ENCODE measurements at regions of chr15 and their contacts with region 1.

Region 1: GRCh38 chr15:52679232-52680040 is at the start of gene ATOSA:
- DNase-seq: peak; percentile 69
- ATAC-seq: peak; percentile 87
- H3K4me3 ChIP-seq: peak within 1 kb of the TSS; percentile 70 to 74
- H3K27ac ChIP-seq: peak within 1 kb of the TSS; percentile 78
- H3K4me1 ChIP-seq: peaks cover 11 to 13% of the 10 kb centered on the region in 2 experiments
- H3K27me3 ChIP-seq: no peaks in the 10 kb centered on the region
- CTCF ChIP-seq: no peak
- POLR2A ChIP-seq: peak; percentile 33
- RAD21 ChIP-seq: no peak
- total RNA-seq, gene ATOSA: 4.7 TPM

Region 2: GRCh38 chr15:52568601-52569256 is 110.7 kb before region 1 on chr15 and contains the start of gene ARPP19:
- CTCF ChIA-PET with region 1: no interaction called
- POLR2A ChIA-PET with region 1: no interaction called
- RAD21 ChIA-PET with region 1: no interaction called
- intact Hi-C with region 1: loop called (anchors 5 kb)
- DNase-seq: peak; percentile 95
- ATAC-seq: peak; percentile 93
- H3K4me3 ChIP-seq: peak within 1 kb of the TSS; percentile 91 to 98
- H3K27ac ChIP-seq: peak within 1 kb of the TSS; percentile 91
- H3K4me1 ChIP-seq: peaks cover 8 to 16% of the 10 kb centered on the region in 2 experiments
- H3K27me3 ChIP-seq: no peaks in the 10 kb centered on the region
- CTCF ChIP-seq: no peak
- POLR2A ChIP-seq: peak; percentile 40
- RAD21 ChIP-seq: no peak
- total RNA-seq, gene ARPP19: 163 TPM

Region 3: DNA sequence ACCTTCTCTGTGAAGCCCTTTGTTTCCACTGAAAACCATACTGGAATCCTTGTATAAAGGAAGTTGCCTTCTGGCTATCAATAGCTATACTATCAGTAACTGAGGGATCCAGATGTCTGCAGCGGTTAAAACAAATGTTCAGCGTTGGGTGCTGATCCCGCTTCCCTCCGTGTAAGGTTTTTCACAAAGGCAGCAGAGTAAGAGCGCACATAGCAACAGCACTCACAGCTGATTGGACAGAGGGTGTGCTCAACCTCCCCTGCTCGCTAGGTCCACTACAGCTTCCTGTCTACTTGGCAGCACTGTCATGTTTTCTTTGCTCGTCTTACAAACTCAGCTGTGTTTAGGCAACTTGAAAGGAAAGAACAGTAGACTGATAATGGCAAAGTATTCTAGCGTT is 27.6 kb before region 1 on chr15:
- CTCF ChIA-PET with region 1: no interaction called
- POLR2A ChIA-PET with region 1: no interaction called
- RAD21 ChIA-PET with region 1: no interaction called
- intact Hi-C with region 1: no loop called
- DNase-seq: peak; percentile 32
- ATAC-seq: peak; percentile 100
- H3K4me3 ChIP-seq: peak overlapping the region; percentile 29 to 52
- H3K27ac ChIP-seq: no peak overlapping the region
- H3K4me1 ChIP-seq: peaks cover 0 to 8% of the 10 kb centered on the region in 2 experiments; a peak in 1 of 4 replicates
- H3K27me3 ChIP-seq: no peaks in the 10 kb centered on the region
- CTCF ChIP-seq: no peak
- POLR2A ChIP-seq: no peak
- RAD21 ChIP-seq: no peak

Region 4: DNA sequence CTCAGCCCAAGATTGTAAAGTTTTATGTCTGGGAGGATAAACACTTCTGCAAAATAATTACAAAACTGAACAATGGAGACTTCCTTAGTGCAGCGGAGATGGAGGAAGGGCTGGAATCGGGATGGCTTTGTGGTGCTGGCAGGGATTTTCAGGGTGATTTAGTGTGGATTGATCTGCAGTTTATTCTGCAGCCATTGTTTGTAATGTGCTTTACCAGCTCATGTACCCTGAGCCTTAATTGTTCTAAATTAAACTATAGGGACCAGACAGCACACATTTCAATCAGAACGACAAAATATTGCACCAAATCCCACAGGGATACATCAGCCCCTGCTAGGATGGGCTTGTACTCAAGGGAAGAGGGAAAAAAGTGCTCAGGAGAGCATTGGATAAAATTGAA is 213.9 kb after region 1 on chr15:
- CTCF ChIA-PET with region 1: no interaction called
- POLR2A ChIA-PET with region 1: no interaction called
- RAD21 ChIA-PET with region 1: no interaction called
- intact Hi-C with region 1: no loop called
- DNase-seq: no peak
- ATAC-seq: no peak
- H3K4me3 ChIP-seq: no peak overlapping the region
- H3K27ac ChIP-seq: no peak overlapping the region
- H3K4me1 ChIP-seq: no peaks in the 10 kb centered on the region
- H3K27me3 ChIP-seq: peaks cover 25% of the 10 kb centered on the region
- CTCF ChIP-seq: no peak
- POLR2A ChIP-seq: no peak
- RAD21 ChIP-seq: no peak

Measured in HCT116 (cell line).